ENCODE measurements at regions of chr9 and their contacts with region 1.

Region 1: DNA sequence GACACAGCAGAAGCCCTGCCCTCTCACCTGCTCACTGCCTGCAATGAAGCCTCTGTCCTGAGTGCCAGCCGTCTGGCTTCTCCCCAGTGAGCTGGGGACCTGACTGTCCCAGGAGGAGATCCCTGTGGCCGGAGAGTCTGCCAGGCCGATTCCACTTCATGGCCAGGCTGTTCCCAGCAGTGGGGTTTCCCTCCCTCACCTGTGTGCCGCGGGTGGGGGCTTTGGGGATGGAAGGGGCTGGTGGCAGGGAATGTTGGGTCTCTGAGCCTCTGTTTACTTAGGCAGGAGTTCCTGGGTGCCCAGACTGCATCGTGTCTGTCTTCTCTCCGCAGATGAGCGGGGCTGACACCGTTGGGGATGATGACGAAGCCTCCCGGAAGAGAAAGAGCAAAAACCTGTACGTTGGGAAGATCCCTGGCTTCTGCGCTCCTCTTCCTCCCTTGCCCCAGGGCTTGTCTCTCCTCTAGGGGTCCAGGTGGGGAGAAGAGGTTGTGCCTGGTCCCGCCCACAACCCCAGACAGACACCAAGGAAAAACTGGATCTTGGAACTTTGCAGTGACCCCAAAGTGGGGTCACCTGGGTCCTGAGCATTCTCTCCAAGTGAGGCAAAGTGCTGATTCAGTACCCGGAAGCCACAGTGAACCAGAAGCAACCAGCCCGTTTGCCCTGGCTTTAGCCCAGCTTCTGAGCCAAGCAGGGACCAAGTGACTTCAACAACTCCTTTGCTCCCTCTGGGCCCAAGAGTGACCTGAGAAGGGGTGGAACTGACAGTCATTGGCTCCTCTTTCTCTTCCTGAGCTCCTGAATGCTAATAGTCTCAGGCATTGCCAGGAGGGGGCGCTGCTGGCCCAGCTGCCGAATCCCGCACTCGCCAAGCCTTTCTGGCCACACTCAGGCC is 127.7 kb downstream of the RGS3 start:
- DNase-seq: peak; percentile 86
- ATAC-seq: peak; percentile 77
- H3K4me3 Mint-ChIP-seq: no peak overlapping the region
- H3K27ac Mint-ChIP-seq: peak overlapping the region; percentile 33
- H3K4me1 Mint-ChIP-seq: peaks cover 40% of the 10 kb centered on the region
- H3K27me3 Mint-ChIP-seq: no peaks in the 10 kb centered on the region
- CTCF ChIP-seq: peak; percentile 88

Region 2: DNA sequence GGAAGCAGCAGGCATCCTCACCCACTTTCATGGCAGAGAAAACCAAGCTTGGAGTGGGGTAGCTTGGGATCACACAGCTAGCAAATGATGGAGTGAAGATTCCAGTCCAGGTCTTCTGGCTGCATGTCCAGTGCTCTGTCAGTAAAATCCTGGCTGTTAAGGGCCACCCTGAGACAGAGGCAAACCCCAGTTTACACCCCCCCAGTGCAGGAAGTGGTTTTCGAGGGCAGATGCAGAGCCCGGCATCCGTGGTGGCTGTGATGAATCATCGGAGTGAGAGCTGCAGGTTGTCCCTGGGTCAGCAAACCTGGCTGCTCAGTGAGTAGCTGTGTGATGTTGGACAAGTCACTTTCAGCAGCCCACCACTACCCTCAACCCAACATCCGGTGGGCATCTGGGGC is 12.4 kb before region 1 on chr9:
- CTCF ChIA-PET with region 1: interaction called, 42 read pairs
- POLR2A ChIA-PET with region 1: interaction called, 9 read pairs
- intact Hi-C with region 1: no loop called
- DNase-seq: peak; percentile 96
- ATAC-seq: peak; percentile 71
- H3K4me3 Mint-ChIP-seq: peak overlapping the region; percentile 85
- H3K27ac Mint-ChIP-seq: peak overlapping the region; percentile 95
- H3K4me1 Mint-ChIP-seq: peaks cover 83% of the 10 kb centered on the region
- H3K27me3 Mint-ChIP-seq: no peaks in the 10 kb centered on the region
- CTCF ChIP-seq: no peak

Region 3: DNA sequence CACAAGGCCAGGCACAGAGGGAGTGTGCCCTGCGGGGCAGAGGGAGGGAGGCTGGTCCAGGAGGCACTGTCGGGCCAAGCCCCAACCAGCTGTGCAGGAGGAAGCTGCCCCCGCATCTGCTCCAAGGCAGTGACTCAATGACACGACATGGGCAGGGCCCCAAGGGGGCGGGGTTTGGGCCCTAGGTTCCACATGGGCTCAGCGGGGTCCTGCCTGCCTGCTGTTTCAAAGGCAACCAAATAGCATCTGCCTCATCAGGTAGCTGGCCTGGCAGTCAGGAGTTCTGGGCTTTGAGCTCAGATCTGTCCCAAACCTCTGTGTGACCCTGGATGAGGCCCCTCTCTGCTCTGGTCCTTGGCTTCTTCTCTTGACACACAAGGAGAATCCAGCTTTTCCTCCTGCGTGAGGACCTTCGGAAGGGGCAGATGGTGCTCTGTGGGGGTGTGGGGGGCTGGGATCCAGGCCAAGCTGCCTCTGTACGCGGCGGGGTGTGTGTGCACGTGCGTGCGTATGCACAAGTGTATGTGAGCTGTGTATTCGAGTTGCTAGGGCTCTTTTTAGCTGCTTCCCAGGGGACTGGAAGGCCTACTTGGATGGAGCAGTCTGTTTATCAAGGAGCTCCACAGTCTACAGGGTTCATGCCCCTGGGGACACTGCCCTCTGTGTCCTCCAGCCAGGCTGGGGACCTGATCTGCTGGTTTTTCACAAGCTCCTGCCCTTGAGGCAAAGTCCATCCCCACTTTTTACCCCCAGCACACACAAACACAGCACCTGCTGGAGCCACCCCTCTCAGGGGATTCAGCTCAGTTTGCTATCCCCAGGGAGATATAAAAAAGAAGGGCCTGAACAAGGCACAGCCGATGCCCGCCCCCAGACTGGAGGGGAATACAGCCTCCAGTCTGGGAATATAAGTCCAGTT is 11.1 kb after region 1 on chr9:
- CTCF ChIA-PET with region 1: interaction called, 97 read pairs
- POLR2A ChIA-PET with region 1: interaction called, 3 read pairs
- intact Hi-C with region 1: no loop called
- DNase-seq: peak; percentile 95
- ATAC-seq: peak; percentile 100
- H3K4me3 Mint-ChIP-seq: no peak overlapping the region
- H3K27ac Mint-ChIP-seq: peak overlapping the region; percentile 78
- H3K4me1 Mint-ChIP-seq: peaks cover 14% of the 10 kb centered on the region
- H3K27me3 Mint-ChIP-seq: no peaks in the 10 kb centered on the region
- CTCF ChIP-seq: no peak

Region 4: GRCh38 chr9:113614843-113615648 is 23.8 kb after region 1 on chr9:
- CTCF ChIA-PET with region 1: interaction called, 10 read pairs
- POLR2A ChIA-PET with region 1: no interaction called
- intact Hi-C with region 1: no loop called
- DNase-seq: peak; percentile 63
- ATAC-seq: peak; percentile 78
- H3K4me3 Mint-ChIP-seq: peak overlapping the region; percentile 0
- H3K27ac Mint-ChIP-seq: peak overlapping the region; percentile 74
- H3K4me1 Mint-ChIP-seq: peaks cover 46% of the 10 kb centered on the region
- H3K27me3 Mint-ChIP-seq: peaks cover 6% of the 10 kb centered on the region
- CTCF ChIP-seq: no peak

Region 5: DNA sequence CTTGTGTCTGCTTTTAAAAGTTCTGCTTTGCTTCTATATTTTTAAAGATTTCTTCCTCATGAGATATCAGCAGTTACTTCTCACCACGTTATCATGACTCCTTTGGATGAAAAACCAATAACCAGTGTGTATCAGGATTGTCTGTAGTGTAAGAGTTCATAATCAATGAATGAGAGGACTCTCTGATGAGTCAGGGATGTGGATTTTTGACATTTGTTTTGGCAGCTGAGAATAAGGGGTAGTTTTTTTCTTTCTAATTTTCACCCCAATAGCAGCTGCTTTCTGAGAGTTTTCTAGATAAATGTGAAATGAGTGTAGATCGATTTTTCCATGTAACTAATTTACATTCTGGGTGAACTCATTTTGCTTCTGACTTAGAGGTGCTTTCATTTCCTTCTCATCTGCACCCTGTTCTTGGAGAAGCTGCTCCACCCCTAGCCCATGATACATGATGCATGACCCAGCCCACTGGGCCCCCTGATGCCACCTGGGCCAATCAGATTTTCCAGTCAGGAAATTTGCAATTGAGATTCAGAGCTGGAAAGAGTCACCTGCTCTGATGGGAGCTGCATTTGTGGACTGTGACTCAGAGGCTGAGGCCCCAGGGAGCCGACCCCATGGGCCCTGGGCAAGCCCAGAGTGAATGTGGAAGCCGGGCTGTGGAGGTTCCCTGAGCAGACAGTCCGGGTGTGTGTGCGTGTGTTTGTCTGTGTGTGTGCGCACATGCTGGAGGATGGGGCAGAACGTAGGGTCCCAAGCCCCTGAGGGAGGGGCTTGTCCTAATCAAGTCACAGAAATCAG is 31.6 kb after region 1 on chr9:
- CTCF ChIA-PET with region 1: interaction called, 17 read pairs
- POLR2A ChIA-PET with region 1: interaction called, 3 read pairs
- intact Hi-C with region 1: no loop called
- DNase-seq: peak; percentile 89
- ATAC-seq: peak; percentile 91
- H3K4me3 Mint-ChIP-seq: peak overlapping the region; percentile 62
- H3K27ac Mint-ChIP-seq: peak overlapping the region; percentile 98
- H3K4me1 Mint-ChIP-seq: peaks cover 50% of the 10 kb centered on the region
- H3K27me3 Mint-ChIP-seq: peaks cover 6% of the 10 kb centered on the region
- CTCF ChIP-seq: no peak

Measured in activated CD8-positive, alpha-beta T cell treated with anti-CD3 and anti-CD28 coated beads for 36 hours (primary cell).